Activated naive CD4-positive, alpha-beta T cell treated with anti-CD3 and anti-CD28 coated beads for 36 hours (primary cell): ENCODE measurements at regions of chr4 and their contacts with region 1.

Region 1: GRCh38 chr4:144174401-144175067 is 34.0 kb upstream of the GYPA start:
- DNase-seq: peak; percentile 32
- H3K4me3 Mint-ChIP-seq: no peak overlapping the region
- H3K27ac Mint-ChIP-seq: peak overlapping the region; percentile 24
- H3K4me1 Mint-ChIP-seq: peaks cover 15% of the 10 kb centered on the region
- H3K27me3 Mint-ChIP-seq: peaks cover 4% of the 10 kb centered on the region

Region 2: DNA sequence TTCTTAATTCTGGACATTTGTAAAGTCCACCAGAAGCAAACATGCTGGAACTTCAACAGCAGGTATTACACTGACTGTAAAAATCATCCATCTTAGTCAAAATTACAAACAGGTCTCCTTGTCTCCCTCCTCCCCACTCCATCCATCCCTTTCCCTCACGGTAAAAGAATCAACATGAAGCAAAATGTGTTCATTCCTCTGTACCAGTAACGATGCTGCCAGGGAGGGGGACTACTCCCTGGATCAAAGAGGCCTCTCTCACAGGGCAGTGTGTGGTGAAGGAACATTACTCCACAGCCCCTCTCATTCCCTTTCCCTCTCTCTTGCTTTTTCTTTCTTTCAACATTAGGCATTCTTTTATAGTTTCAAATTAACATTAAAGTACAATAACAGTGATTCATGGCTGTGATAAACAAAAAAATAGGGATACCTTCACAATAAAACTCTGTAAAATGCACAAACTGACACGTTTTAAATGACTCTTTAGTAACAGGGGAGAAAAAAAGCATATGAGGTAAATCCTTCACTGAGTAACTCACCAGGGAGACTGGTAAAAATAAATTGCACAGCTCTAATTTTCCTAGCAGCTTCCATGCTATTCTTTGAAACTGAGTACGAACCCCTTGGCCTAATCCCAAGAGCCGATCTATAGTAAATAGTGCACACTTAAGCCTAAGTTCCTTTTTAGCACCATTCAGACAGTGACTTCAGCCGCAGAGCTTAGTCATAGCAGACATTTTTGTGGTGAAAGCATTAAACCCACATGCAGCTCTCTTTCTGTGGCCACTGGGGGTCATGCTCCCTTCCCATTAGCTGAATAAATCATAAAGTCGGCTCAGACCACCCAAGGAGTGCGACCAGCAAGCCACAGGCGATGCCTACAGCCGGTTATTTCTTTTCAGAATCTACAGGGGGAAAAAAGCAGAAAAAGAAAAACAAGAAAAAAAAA is 181.5 kb after region 1 on chr4:
- CTCF ChIA-PET with region 1: no interaction called
- intact Hi-C with region 1: loop called (anchors 10 kb)
- DNase-seq: peak; percentile 15
- H3K4me3 Mint-ChIP-seq: no peak overlapping the region
- H3K27ac Mint-ChIP-seq: no peak overlapping the region
- H3K4me1 Mint-ChIP-seq: no peaks in the 10 kb centered on the region
- H3K27me3 Mint-ChIP-seq: peaks cover 10% of the 10 kb centered on the region

Region 3: GRCh38 chr4:144374043-144374442 is 199.5 kb after region 1 on chr4:
- CTCF ChIA-PET with region 1: no interaction called
- intact Hi-C with region 1: no loop called
- DNase-seq: no peak
- H3K4me3 Mint-ChIP-seq: no peak overlapping the region
- H3K27ac Mint-ChIP-seq: no peak overlapping the region
- H3K4me1 Mint-ChIP-seq: no peaks in the 10 kb centered on the region
- H3K27me3 Mint-ChIP-seq: no peaks in the 10 kb centered on the region

Region 4: DNA sequence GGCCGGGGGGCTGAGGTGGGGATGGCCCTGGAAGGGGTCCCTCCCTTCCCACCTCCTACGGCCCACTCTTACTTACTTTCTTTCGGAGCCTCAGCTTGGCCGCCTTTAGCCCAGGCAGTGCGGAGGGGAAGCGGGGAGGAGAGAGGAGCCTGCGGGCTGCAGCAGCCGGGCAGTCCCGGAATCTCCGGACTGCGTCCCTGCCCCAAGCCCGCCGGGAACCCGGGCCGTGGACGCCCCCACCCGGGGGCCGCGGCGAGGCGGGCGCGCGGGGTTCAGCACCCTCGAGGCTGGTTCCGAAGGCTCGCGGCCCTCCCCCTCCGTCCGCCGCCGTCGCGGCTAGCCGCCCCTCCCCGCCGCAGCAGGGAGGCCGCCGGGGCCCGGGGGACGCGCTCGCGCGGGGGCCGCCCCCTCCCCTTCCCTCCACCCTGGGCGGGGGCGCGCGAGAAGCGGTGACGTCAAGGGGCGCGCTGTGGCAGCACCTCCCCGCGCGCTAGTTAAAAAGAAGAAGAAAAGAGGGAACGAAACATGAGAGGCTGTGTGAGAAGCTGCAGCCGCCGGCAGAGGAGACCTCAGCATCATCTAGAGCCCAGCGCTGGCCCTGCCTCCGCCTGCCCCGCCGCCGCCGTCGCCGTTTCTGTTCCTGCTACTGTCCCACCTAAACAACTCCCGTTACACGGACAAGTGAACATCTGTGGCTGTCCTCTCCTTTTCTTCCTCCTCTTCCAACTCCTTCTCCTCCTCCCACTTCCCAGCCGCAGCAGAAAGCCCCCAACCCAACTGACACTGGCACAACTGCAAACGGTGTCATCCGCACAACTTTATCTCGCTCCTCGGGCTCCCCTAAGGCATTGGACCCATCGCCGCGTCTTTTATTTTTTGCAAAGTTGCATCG is 471.3 kb after region 1 on chr4 and contains the start of gene HHIP:
- CTCF ChIA-PET with region 1: no interaction called
- intact Hi-C with region 1: loop called (anchors 10 kb)
- DNase-seq: peak; percentile 25
- H3K4me3 Mint-ChIP-seq: peak within 1 kb of the TSS; percentile 77
- H3K27ac Mint-ChIP-seq: no peak within 1 kb of the TSS
- H3K4me1 Mint-ChIP-seq: peaks cover 15% of the 10 kb centered on the region
- H3K27me3 Mint-ChIP-seq: peaks cover 46% of the 10 kb centered on the region
- total RNA-seq, gene HHIP: not detected

Region 5: GRCh38 chr4:145061318-145061920 is 886.9 kb after region 1 on chr4:
- CTCF ChIA-PET with region 1: interaction called, 12 read pairs
- intact Hi-C with region 1: loop called (anchors 1 kb)
- DNase-seq: no peak
- H3K4me3 Mint-ChIP-seq: no peak overlapping the region
- H3K27ac Mint-ChIP-seq: no peak overlapping the region
- H3K4me1 Mint-ChIP-seq: peaks cover 23% of the 10 kb centered on the region
- H3K27me3 Mint-ChIP-seq: no peaks in the 10 kb centered on the region

Region 6: DNA sequence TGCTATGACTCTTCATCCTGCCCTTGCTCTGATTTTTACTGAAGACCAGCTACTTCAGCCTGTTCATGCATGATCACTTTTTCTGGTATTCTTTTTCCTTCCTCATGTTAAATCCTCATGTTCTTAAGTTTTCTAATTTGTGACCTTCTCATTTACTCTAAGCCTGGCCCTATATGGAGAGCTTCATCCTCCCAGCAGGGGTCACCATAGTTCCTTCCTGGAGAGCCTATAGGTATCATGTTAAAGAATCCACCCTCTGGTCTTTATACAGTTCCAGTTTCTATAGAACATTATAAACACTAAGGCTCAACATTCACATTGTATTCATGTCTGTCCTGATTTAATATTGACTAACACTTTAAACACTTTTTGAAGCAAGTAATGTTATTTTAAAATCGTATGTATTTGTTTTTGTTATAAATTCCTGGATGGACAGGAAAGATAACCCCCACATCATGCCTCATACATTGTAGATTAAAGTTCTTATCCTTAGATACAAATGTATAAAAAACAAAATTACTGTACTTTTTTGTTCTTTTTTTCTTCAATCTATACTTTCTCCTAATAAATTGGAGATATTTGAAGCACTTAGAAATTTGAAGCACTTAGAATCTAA is 1059.7 kb after region 1 on chr4:
- CTCF ChIA-PET with region 1: no interaction called
- intact Hi-C with region 1: loop called (anchors 1 kb)
- DNase-seq: peak; percentile 80
- H3K4me3 Mint-ChIP-seq: no peak overlapping the region
- H3K27ac Mint-ChIP-seq: no peak overlapping the region
- H3K4me1 Mint-ChIP-seq: no peaks in the 10 kb centered on the region
- H3K27me3 Mint-ChIP-seq: no peaks in the 10 kb centered on the region

Region 7: DNA sequence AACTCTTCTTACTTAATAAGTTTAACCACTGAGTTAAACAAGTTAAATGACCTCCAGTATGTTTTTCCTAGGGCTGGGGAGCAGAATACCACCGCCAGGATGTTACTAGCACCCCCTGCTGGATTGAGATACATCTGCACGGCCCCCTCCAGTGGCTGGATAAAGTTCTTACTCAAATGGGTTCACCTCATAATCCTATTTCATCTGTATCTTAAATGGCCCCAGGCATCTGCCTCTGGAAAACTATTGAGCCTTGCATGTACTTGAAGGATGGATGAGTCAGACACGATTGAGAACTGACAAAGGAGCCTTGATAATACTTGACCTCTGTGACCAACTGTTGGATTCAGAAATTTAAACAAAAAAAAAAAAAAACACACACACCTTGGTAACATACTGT is 1383.2 kb after region 1 on chr4:
- CTCF ChIA-PET with region 1: no interaction called
- intact Hi-C with region 1: loop called (anchors 5 kb)
- DNase-seq: peak; percentile 73
- H3K4me3 Mint-ChIP-seq: no peak overlapping the region
- H3K27ac Mint-ChIP-seq: no peak overlapping the region
- H3K4me1 Mint-ChIP-seq: peaks cover under 1% of the 10 kb centered on the region
- H3K27me3 Mint-ChIP-seq: peaks cover 5% of the 10 kb centered on the region